IMR-90 (cell line): ENCODE measurements at regions of chr5 and their contacts with region 1.

Region 1: GRCh38 chr5:91101600-91102379 is 281.3 kb downstream of the ARRDC3 start:
- DNase-seq: peak; percentile 84
- ATAC-seq: peak; percentile 100
- H3K4me3 ChIP-seq: no peak overlapping the region
- H3K27ac ChIP-seq: no peak overlapping the region
- H3K4me1 ChIP-seq: no peaks in the 10 kb centered on the region
- H3K27me3 ChIP-seq: no peaks in the 10 kb centered on the region
- CTCF ChIP-seq: peak; percentile 91
- POLR2A ChIP-seq: 0 out of 2 replicates have a peak, but pooled peaks have one; percentile 50
- RAD21 ChIP-seq: peak; percentile 98

Region 2: GRCh38 chr5:90015584-90016018 is 1086.2 kb before region 1 on chr5:
- CTCF ChIA-PET with region 1: no interaction called
- POLR2A ChIA-PET with region 1: no interaction called
- dilution Hi-C with region 1: no loop called
- in situ Hi-C with region 1: no loop called
- intact Hi-C with region 1: no loop called
- DNase-seq: peak; percentile 11
- ATAC-seq: peak; percentile 14; the same call in 1 of the 2 replicates
- H3K4me3 ChIP-seq: no peak overlapping the region
- H3K27ac ChIP-seq: no peak overlapping the region
- H3K4me1 ChIP-seq: no peaks in the 10 kb centered on the region
- H3K27me3 ChIP-seq: no peaks in the 10 kb centered on the region
- CTCF ChIP-seq: no peak
- POLR2A ChIP-seq: no peak
- RAD21 ChIP-seq: no peak

Region 3: GRCh38 chr5:90866333-90866732 is 235.5 kb before region 1 on chr5:
- CTCF ChIA-PET with region 1: no interaction called
- POLR2A ChIA-PET with region 1: no interaction called
- dilution Hi-C with region 1: no loop called
- in situ Hi-C with region 1: loop called (anchors 5 kb)
- intact Hi-C with region 1: loop called (anchors 5 kb)
- DNase-seq: peak; percentile 28
- ATAC-seq: peak; percentile 70
- H3K4me3 ChIP-seq: no peak overlapping the region
- H3K27ac ChIP-seq: no peak overlapping the region
- H3K4me1 ChIP-seq: no peaks in the 10 kb centered on the region; the same call in 1 of the 2 replicates
- H3K27me3 ChIP-seq: no peaks in the 10 kb centered on the region
- CTCF ChIP-seq: peak; percentile 60
- POLR2A ChIP-seq: no peak
- RAD21 ChIP-seq: peak; percentile 54

Region 4: DNA sequence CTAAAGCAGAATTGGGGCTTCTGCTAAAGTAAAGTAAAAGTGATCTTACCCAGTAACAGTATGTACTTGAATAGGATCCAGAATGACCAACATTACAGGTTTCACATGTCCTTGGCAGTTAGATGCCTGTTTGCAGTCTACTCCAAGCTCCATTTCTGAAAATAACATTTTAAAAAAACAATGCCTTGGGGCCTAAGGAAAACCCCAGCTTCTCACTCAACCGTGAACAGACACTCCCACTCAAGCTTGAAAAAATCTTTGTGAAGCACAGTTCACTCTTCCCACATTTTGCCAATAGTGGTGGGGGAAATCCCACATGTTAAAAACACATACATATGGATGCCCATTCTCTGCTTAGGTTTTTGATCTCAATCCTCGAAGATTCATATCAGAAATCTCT is 22.8 kb before region 1 on chr5:
- CTCF ChIA-PET with region 1: no interaction called
- POLR2A ChIA-PET with region 1: no interaction called
- dilution Hi-C with region 1: no loop called
- in situ Hi-C with region 1: no loop called
- intact Hi-C with region 1: no loop called
- DNase-seq: no peak
- ATAC-seq: no peak
- H3K4me3 ChIP-seq: no peak overlapping the region
- H3K27ac ChIP-seq: no peak overlapping the region
- H3K4me1 ChIP-seq: no peaks in the 10 kb centered on the region; the same call in 1 of the 2 replicates
- H3K27me3 ChIP-seq: no peaks in the 10 kb centered on the region
- CTCF ChIP-seq: no peak
- POLR2A ChIP-seq: no peak
- RAD21 ChIP-seq: no peak

Region 5: GRCh38 chr5:91280362-91281269 is 178.8 kb after region 1 on chr5:
- CTCF ChIA-PET with region 1: no interaction called
- POLR2A ChIA-PET with region 1: no interaction called
- dilution Hi-C with region 1: no loop called
- in situ Hi-C with region 1: no loop called
- intact Hi-C with region 1: loop called (anchors 2 kb)
- DNase-seq: peak; percentile 99
- ATAC-seq: peak; percentile 88
- H3K4me3 ChIP-seq: peak overlapping the region; percentile 48
- H3K27ac ChIP-seq: peak overlapping the region; percentile 98
- H3K4me1 ChIP-seq: peaks cover 16% of the 10 kb centered on the region
- H3K27me3 ChIP-seq: no peaks in the 10 kb centered on the region
- CTCF ChIP-seq: no peak; the same call in 1 of the 2 replicates
- POLR2A ChIP-seq: peak; percentile 94
- RAD21 ChIP-seq: peak; percentile 37; the same call in 1 of the 2 replicates

Region 6: DNA sequence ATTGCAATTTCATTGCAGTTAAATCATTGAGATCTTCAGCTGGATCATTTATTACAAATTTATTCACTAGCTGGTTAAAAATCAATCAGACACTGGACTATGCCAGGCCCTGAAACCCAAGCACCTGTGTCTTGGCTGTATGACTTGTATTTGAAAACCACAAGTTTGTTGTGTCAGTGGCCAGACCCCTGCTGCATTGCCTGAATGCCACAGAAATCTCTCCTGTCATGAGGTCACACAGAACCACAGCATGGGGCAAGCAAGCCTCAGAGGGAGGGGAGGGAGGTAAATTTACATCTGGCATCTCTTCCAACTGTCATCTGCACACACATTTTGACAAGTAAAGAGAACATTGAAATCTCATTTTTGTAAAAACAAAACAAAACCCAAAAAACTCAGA is 191.3 kb after region 1 on chr5:
- CTCF ChIA-PET with region 1: no interaction called
- POLR2A ChIA-PET with region 1: no interaction called
- dilution Hi-C with region 1: no loop called
- in situ Hi-C with region 1: no loop called
- intact Hi-C with region 1: no loop called
- DNase-seq: peak; percentile 55
- ATAC-seq: peak; percentile 56
- H3K4me3 ChIP-seq: no peak overlapping the region
- H3K27ac ChIP-seq: no peak overlapping the region
- H3K4me1 ChIP-seq: peaks cover 4% of the 10 kb centered on the region
- H3K27me3 ChIP-seq: no peaks in the 10 kb centered on the region
- CTCF ChIP-seq: no peak
- POLR2A ChIP-seq: no peak
- RAD21 ChIP-seq: no peak

Region 7: DNA sequence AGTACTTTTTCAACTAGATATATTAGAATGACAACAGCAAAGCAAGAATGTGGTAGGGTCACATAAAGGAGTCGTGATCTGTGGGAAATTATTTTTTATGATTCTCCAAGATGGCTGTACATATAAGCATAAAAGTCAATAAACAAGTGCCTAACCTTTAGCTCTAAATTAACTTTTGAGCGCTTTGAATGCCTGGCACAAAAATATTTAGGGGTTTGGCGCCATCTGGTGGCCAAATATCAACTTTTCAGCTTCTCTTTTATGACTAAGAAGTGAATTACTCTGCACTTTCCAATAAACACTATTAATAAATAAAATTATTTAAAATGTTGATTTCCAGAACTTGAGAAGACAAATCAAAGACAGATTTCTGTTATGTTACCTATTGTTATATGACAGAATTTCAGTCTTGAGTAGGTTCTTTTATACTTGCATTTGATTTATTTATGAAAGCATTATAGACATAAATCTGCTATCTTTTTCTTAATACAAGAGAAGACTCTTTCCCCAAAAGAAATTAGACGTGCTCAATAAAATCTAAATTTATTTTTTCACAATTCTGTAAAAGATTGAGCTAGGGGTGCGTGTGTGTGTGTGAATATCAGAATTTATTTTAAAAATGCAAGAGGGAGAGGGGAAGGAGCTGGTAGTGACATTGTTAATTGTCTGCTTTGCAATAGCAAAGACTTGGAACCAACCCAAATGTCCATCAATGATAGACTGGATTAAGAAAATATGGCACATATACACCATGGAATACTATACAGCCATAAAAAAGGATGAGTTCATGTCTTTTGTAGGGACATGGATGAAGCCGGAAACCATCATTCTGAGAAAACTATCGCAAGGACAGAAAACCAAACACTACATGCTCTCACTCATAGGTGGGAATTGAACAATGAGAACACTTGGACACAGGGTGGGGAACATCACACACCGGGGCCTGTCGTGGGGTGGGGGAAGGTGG is 318.1 kb after region 1 on chr5:
- CTCF ChIA-PET with region 1: no interaction called
- POLR2A ChIA-PET with region 1: no interaction called
- dilution Hi-C with region 1: no loop called
- in situ Hi-C with region 1: no loop called
- intact Hi-C with region 1: loop called (anchors 1 kb)
- DNase-seq: peak; percentile 55
- ATAC-seq: peak; percentile 50
- H3K4me3 ChIP-seq: no peak overlapping the region
- H3K27ac ChIP-seq: no peak overlapping the region
- H3K4me1 ChIP-seq: no peaks in the 10 kb centered on the region
- H3K27me3 ChIP-seq: no peaks in the 10 kb centered on the region
- CTCF ChIP-seq: peak; percentile 73
- POLR2A ChIP-seq: no peak
- RAD21 ChIP-seq: peak; percentile 76